ENCODE measurements at regions of chr20 and their contacts with region 1.

Region 1: DNA sequence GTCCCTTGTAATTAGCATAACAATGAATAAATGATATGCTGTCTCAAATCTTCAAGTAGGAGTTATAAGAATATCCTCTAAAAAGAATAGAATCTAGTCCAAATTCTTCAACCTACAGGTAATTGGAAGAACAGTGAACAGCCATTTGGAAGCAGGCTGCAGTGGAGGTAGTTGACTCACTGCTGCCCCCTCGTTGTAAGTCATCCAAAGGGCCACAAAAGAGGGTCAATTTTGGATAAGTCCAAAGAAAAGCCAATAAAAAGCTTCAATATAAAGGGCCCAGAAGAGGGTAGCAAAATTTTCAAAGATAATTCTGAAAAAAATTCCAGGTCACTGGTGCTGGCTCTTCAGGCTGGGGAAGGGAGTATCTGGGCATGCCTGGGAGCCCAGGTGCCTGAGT is 60.8 kb upstream of the SSTR4 start:
- DNase-seq: peak; percentile 28
- H3K4me3 ChIP-seq: no peak overlapping the region
- H3K27ac ChIP-seq: no peak overlapping the region
- H3K4me1 ChIP-seq: no peaks in the 10 kb centered on the region
- H3K27me3 ChIP-seq: peaks cover 4 to 11% of the 10 kb centered on the region in 2 experiments
- CTCF ChIP-seq: peak; percentile 60 to 64
- POLR2A ChIP-seq: no peak

Region 2: DNA sequence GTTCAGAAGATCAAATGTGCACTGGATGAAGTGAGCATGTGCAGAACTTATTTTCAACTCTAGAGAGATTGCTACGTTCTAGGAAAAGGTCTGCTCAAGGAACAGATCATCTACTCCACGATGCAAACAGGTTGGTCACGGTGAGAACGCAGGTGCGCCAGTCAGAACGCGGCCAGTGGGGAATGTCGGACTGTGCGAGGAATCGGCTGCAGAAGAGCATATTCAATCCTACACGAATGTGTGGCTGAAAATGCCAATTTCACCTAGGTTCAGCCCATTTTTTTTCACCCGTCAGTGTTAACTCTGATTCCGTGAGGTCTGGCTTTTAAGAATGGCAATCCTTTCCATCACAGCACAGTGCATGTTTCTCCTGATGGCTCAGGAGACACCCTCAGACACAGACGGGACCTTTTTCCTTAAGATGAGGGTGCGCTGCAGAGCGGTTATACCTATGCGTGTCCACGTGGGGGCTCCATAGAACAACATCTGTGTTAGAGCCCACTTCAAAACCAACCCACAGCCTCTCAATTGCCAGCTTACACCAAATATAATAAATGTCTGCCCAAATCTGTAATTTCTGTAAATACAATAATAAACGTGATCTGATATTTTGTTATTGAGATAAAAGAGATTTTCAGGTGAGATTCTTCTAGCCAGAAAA is 640.3 kb before region 1 on chr20:
- CTCF ChIA-PET with region 1: interaction called, 5 read pairs
- POLR2A ChIA-PET with region 1: no interaction called
- dilution Hi-C with region 1: no loop called
- intact Hi-C with region 1: loop called (anchors 10 kb)
- DNase-seq: peak; percentile 62
- H3K4me3 ChIP-seq: no peak overlapping the region
- H3K27ac ChIP-seq: no peak overlapping the region
- H3K4me1 ChIP-seq: no peaks in the 10 kb centered on the region
- H3K27me3 ChIP-seq: peaks cover 0 to 5% of the 10 kb centered on the region in 2 experiments
- CTCF ChIP-seq: peak; percentile 63 to 79
- POLR2A ChIP-seq: no peak

Region 3: GRCh38 chr20:22723648-22724047 is 250.7 kb before region 1 on chr20:
- CTCF ChIA-PET with region 1: interaction called, 38 read pairs
- POLR2A ChIA-PET with region 1: no interaction called
- dilution Hi-C with region 1: no loop called
- intact Hi-C with region 1: no loop called
- DNase-seq: no peak
- H3K4me3 ChIP-seq: no peak overlapping the region
- H3K27ac ChIP-seq: no peak overlapping the region
- H3K4me1 ChIP-seq: peaks cover 12% of the 10 kb centered on the region
- H3K27me3 ChIP-seq: no peaks in the 10 kb centered on the region
- CTCF ChIP-seq: no peak
- POLR2A ChIP-seq: no peak

Region 4: GRCh38 chr20:22846863-22847262 is 127.5 kb before region 1 on chr20:
- CTCF ChIA-PET with region 1: interaction called, 68 read pairs
- POLR2A ChIA-PET with region 1: no interaction called
- dilution Hi-C with region 1: no loop called
- intact Hi-C with region 1: loop called (anchors 1 kb)
- DNase-seq: no peak
- H3K4me3 ChIP-seq: no peak overlapping the region
- H3K27ac ChIP-seq: no peak overlapping the region
- H3K4me1 ChIP-seq: peaks cover 4% of the 10 kb centered on the region
- H3K27me3 ChIP-seq: peaks cover 1 to 5% of the 10 kb centered on the region in 2 experiments
- CTCF ChIP-seq: no peak
- POLR2A ChIP-seq: no peak

Region 5: GRCh38 chr20:22887796-22888195 is 86.6 kb before region 1 on chr20:
- CTCF ChIA-PET with region 1: no interaction called
- POLR2A ChIA-PET with region 1: no interaction called
- dilution Hi-C with region 1: no loop called
- intact Hi-C with region 1: no loop called
- DNase-seq: no peak
- H3K4me3 ChIP-seq: no peak overlapping the region
- H3K27ac ChIP-seq: no peak overlapping the region
- H3K4me1 ChIP-seq: no peaks in the 10 kb centered on the region
- H3K27me3 ChIP-seq: peaks cover 0 to 4% of the 10 kb centered on the region in 2 experiments
- CTCF ChIP-seq: no peak
- POLR2A ChIP-seq: no peak

Region 6: DNA sequence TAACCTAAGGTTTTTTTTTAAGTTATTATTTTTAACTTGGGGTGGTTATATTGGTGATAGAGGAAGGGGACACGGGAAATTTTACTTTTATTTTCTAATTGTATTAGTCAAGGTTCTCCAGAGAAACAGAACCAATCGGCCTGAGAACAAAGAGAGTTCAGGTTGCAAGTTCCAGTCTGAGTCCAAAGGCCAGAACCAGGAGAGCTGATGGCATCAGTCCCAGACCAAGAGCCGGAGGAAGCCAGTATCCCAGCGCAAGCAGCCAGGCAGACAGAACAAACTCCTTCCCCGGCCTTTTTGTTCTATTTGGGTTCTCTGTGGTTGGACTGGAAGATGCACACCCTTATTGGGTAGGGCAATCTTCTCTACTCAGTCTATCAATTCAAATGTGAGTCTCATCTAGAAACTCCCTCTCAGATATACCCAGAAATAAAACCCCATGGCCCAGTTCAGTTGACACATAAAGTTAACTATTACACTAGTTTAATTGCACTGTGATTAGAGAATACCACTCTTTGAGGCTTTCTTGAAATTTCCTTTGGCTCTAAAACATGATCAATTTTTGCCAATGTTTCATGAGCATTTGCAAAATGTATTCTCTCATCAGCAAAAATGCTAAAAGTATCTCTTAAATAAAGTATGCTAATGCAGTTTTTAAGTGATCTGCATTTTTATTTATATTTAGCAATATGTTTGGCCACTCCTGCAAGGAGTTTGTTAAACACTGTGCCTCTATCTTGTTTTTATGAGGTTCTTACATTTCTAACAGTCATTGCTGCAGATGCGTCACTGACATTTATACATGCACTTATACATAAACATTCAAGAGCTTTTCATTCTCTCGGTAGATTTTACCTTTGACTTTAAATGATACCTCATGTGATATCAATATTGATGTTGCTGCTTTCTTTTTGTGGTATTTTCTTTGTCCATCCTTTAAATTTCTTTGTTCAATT is 42.4 kb before region 1 on chr20:
- CTCF ChIA-PET with region 1: interaction called, 10 read pairs
- POLR2A ChIA-PET with region 1: no interaction called
- dilution Hi-C with region 1: no loop called
- intact Hi-C with region 1: no loop called
- DNase-seq: no peak
- H3K4me3 ChIP-seq: no peak overlapping the region
- H3K27ac ChIP-seq: no peak overlapping the region
- H3K4me1 ChIP-seq: no peaks in the 10 kb centered on the region
- H3K27me3 ChIP-seq: no peaks in the 10 kb centered on the region
- CTCF ChIP-seq: no peak
- POLR2A ChIP-seq: no peak

Region 7: GRCh38 chr20:22962557-22963438 is 11.6 kb before region 1 on chr20:
- CTCF ChIA-PET with region 1: interaction called, 28 read pairs
- POLR2A ChIA-PET with region 1: no interaction called
- dilution Hi-C with region 1: no loop called
- intact Hi-C with region 1: no loop called
- DNase-seq: no peak
- H3K4me3 ChIP-seq: no peak overlapping the region
- H3K27ac ChIP-seq: no peak overlapping the region
- H3K4me1 ChIP-seq: no peaks in the 10 kb centered on the region
- H3K27me3 ChIP-seq: peaks cover 11 to 16% of the 10 kb centered on the region in 2 experiments
- CTCF ChIP-seq: no peak
- POLR2A ChIP-seq: no peak

Region 8: DNA sequence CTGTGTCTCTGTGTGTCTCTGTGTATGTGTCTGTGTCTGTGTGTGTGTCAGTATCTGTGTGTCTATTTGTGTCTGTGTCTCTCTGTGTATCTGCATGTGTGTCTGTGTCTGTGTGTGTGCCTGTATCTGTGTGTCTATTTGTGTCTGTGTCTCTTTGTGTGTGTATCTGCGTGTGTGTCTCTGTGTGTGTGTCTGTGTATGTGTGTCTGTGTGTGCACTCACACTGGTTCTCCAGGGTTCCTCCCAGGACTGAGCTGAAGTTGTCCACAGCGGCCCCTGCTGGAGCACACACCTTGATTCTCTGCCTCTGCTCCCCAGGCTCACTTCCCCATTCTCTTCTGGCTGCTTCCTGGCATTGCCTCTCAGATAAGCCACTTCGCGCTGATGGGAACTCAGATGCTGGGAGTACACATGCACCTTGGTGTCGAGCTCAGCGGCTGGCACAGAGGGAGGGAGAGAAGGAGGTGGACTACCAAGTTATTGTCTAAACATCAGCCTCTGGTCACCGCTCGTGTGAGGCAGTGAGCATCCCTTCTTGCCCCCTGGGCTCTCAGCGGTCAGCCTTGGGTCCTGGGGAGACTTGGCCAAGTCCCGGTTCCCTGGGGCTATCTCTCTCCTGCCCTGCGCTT is 271.3 kb after region 1 on chr20:
- CTCF ChIA-PET with region 1: interaction called, 10 read pairs
- POLR2A ChIA-PET with region 1: no interaction called
- dilution Hi-C with region 1: no loop called
- intact Hi-C with region 1: no loop called
- DNase-seq: peak; percentile 77
- H3K4me3 ChIP-seq: no peak overlapping the region
- H3K27ac ChIP-seq: no peak overlapping the region
- H3K4me1 ChIP-seq: no peaks in the 10 kb centered on the region
- H3K27me3 ChIP-seq: no peaks in the 10 kb centered on the region
- CTCF ChIP-seq: peak; percentile 67 to 88
- POLR2A ChIP-seq: no peak

Measured in endothelial cell of umbilical vein (primary cell).